IMR-90 (cell line): ENCODE measurements at regions of chr9 and their contacts with region 1.

Region 1: GRCh38 chr9:3525836-3526164 is at the start of gene RFX3:
- DNase-seq: peak; percentile 97
- ATAC-seq: peak; percentile 86
- H3K4me3 ChIP-seq: peak within 1 kb of the TSS; percentile 97
- H3K27ac ChIP-seq: peak within 1 kb of the TSS; percentile 99
- H3K4me1 ChIP-seq: no peaks in the 10 kb centered on the region; the same call in 1 of the 2 replicates
- H3K27me3 ChIP-seq: no peaks in the 10 kb centered on the region
- CTCF ChIP-seq: peak; percentile 15; the same call in 1 of the 2 replicates
- POLR2A ChIP-seq: no peak
- RAD21 ChIP-seq: no peak
- total RNA-seq, gene RFX3: 2.5 and 2.7 TPM in 2 replicates

Region 2: GRCh38 chr9:2857564-2858198 is 668.1 kb before region 1 on chr9:
- CTCF ChIA-PET with region 1: no interaction called
- POLR2A ChIA-PET with region 1: no interaction called
- dilution Hi-C with region 1: no loop called
- in situ Hi-C with region 1: loop called (anchors 25 kb)
- intact Hi-C with region 1: no loop called
- DNase-seq: peak; percentile 66
- ATAC-seq: peak; percentile 97
- H3K4me3 ChIP-seq: no peak overlapping the region
- H3K27ac ChIP-seq: no peak overlapping the region
- H3K4me1 ChIP-seq: no peaks in the 10 kb centered on the region
- H3K27me3 ChIP-seq: peaks cover 13% of the 10 kb centered on the region
- CTCF ChIP-seq: peak; percentile 90
- POLR2A ChIP-seq: no peak
- RAD21 ChIP-seq: peak; percentile 77

Region 3: DNA sequence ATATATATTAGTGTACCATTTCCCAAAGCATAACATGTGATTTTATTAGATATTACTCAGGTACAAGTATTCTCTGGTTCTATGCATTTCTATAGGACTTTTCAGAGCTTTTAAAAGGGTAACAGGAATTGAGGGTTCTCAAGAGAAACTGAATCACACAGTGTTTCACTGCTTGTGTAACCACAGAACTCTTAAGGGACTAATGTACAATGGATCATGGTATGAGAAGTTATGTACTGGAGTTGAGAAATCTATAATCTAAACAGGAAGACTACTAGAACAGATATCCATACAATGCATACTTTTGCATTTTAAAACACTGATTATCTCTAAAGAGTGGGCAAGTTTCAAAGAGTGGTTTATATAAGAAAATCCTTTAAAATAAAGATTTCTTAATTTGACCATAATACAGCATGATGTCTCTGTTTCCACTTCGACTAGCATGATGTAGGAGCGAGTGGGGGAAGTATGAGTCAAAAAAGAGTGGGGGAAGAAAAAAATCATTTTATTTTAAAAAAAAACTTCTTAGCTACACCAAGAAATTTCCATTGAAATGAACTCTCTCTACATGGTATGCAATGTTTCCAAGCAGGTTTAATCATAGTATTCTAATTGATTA is 183.5 kb before region 1 on chr9:
- CTCF ChIA-PET with region 1: no interaction called
- POLR2A ChIA-PET with region 1: no interaction called
- dilution Hi-C with region 1: no loop called
- in situ Hi-C with region 1: no loop called
- intact Hi-C with region 1: loop called (anchors 10 kb)
- DNase-seq: peak; percentile 89
- ATAC-seq: peak; percentile 85
- H3K4me3 ChIP-seq: no peak overlapping the region
- H3K27ac ChIP-seq: peak overlapping the region; percentile 64; the same call in 1 of the 2 replicates
- H3K4me1 ChIP-seq: peaks cover 7% of the 10 kb centered on the region
- H3K27me3 ChIP-seq: no peaks in the 10 kb centered on the region
- CTCF ChIP-seq: no peak
- POLR2A ChIP-seq: no peak
- RAD21 ChIP-seq: no peak

Region 4: DNA sequence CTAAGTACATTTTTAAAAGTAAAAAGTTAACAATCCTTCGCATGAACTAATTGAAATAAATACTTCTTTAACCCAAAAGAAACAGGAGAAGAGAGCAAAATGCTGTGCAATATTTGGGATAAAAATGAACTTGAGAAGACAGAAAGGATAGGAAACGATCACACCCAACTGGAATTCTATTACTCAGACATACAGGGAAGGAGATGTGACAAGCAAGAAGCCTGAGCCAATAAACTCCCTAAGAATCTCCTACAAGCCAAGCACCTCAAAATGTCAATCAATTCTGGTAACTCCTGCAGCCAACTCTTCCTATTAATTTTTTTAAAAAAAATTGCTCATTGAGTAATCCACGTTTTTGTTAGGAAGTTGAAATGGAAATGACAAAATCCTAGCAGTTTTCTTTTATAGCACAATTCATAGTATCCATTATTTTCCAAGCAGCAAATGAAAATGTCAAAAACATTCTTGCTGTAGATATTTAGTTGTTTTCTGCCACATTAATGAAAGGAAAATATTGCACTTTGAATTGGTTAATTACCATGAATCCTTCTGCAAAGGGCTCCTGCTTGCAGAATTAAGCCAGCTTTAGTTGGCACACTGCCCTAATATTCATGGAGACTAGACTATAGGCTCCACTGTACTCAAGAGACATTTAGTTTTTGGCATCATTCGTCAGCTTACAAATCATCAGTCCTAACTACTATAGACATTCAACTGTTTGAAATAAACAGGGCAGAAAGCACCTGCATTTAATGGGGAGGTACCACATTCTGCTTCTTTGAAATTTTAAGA is 89.0 kb before region 1 on chr9:
- CTCF ChIA-PET with region 1: no interaction called
- POLR2A ChIA-PET with region 1: no interaction called
- dilution Hi-C with region 1: no loop called
- in situ Hi-C with region 1: no loop called
- intact Hi-C with region 1: no loop called
- DNase-seq: peak; percentile 58
- ATAC-seq: no peak
- H3K4me3 ChIP-seq: no peak overlapping the region
- H3K27ac ChIP-seq: no peak overlapping the region
- H3K4me1 ChIP-seq: peaks cover 2% of the 10 kb centered on the region; the same call in 1 of the 2 replicates
- H3K27me3 ChIP-seq: no peaks in the 10 kb centered on the region
- CTCF ChIP-seq: no peak
- POLR2A ChIP-seq: no peak
- RAD21 ChIP-seq: no peak

Region 5: GRCh38 chr9:4086119-4087090 is 560.6 kb after region 1 on chr9:
- CTCF ChIA-PET with region 1: no interaction called
- POLR2A ChIA-PET with region 1: no interaction called
- dilution Hi-C with region 1: no loop called
- in situ Hi-C with region 1: no loop called
- intact Hi-C with region 1: loop called (anchors 10 kb)
- DNase-seq: peak; percentile 43
- ATAC-seq: no peak
- H3K4me3 ChIP-seq: no peak overlapping the region
- H3K27ac ChIP-seq: peak overlapping the region; percentile 42; the same call in 1 of the 2 replicates
- H3K4me1 ChIP-seq: peaks cover 12% of the 10 kb centered on the region
- H3K27me3 ChIP-seq: no peaks in the 10 kb centered on the region
- CTCF ChIP-seq: no peak
- POLR2A ChIP-seq: no peak
- RAD21 ChIP-seq: no peak

Region 6: DNA sequence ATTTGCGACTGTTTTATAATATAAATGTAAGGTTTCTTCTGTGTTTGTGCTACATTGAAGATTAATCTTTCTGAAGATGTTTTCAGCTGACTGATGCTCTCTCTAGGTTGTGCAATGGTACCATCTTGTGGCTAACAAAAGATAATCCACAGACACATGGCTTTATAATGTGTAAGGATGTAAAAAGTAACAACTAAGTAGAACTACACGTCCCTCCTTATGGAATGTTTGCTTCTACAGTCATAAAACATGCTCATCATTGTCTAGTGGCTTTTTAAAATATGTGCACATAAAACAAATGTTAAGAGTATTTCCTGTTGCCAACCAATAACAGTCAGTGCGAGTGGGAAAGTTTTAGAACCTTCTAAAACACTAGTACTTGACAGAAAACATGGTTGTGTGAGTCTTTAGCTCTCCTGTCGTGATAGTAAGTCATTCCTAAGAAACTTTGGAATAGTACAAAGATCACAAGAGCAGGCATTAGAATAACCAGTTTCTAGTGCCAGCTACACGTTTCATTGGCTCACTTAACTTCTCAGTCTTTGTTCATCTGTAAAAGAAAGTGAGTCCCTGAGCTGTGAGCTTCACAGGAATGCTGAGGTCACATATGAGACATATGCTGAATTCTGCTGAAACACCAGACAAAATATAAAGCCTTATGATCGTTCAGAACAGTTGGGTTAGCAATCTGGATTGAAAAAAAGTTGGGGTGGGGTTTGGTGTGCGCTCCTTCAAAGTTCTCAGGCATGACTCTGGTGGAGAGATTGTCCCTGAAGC is 849.8 kb after region 1 on chr9:
- CTCF ChIA-PET with region 1: interaction called, 5 read pairs
- POLR2A ChIA-PET with region 1: interaction called, 3 read pairs
- dilution Hi-C with region 1: no loop called
- in situ Hi-C with region 1: no loop called
- intact Hi-C with region 1: loop called (anchors 2 kb)
- DNase-seq: peak; percentile 82
- ATAC-seq: peak; percentile 82
- H3K4me3 ChIP-seq: no peak overlapping the region
- H3K27ac ChIP-seq: no peak overlapping the region
- H3K4me1 ChIP-seq: no peaks in the 10 kb centered on the region
- H3K27me3 ChIP-seq: peaks cover 8% of the 10 kb centered on the region
- CTCF ChIP-seq: peak; percentile 84
- POLR2A ChIP-seq: no peak
- RAD21 ChIP-seq: peak; percentile 93